ENCODE measurements at regions of chr2 and their contacts with region 1.

Region 1: GRCh38 chr2:109031476-109032228 is 42.6 kb upstream of the EDAR start:
- DNase-seq: peak; percentile 85
- H3K4me3 Mint-ChIP-seq: peak overlapping the region; percentile 81
- H3K27ac Mint-ChIP-seq: peak overlapping the region; percentile 91
- H3K4me1 Mint-ChIP-seq: peaks cover 65% of the 10 kb centered on the region
- H3K27me3 Mint-ChIP-seq: no peaks in the 10 kb centered on the region

Region 2: GRCh38 chr2:108533832-108534583 is 497.6 kb before region 1 on chr2 and contains the start of gene LIMS1:
- CTCF ChIA-PET with region 1: no interaction called
- intact Hi-C with region 1: loop called (anchors 5 kb)
- DNase-seq: peak; percentile 89
- H3K4me3 Mint-ChIP-seq: peak within 1 kb of the TSS; percentile 96
- H3K27ac Mint-ChIP-seq: peak within 1 kb of the TSS; percentile 82
- H3K4me1 Mint-ChIP-seq: peaks cover 31% of the 10 kb centered on the region
- H3K27me3 Mint-ChIP-seq: no peaks in the 10 kb centered on the region
- total RNA-seq, gene LIMS1: 43.8 to 47.1 TPM

Region 3: GRCh38 chr2:108855194-108855593 is 176.5 kb before region 1 on chr2:
- CTCF ChIA-PET with region 1: no interaction called
- intact Hi-C with region 1: loop called (anchors 5 kb)
- DNase-seq: no peak
- H3K4me3 Mint-ChIP-seq: no peak overlapping the region
- H3K27ac Mint-ChIP-seq: no peak overlapping the region
- H3K4me1 Mint-ChIP-seq: peaks cover 2% of the 10 kb centered on the region
- H3K27me3 Mint-ChIP-seq: no peaks in the 10 kb centered on the region

Region 4: GRCh38 chr2:108965540-108966236 is 66.0 kb before region 1 on chr2:
- CTCF ChIA-PET with region 1: no interaction called
- intact Hi-C with region 1: loop called (anchors 2 kb)
- DNase-seq: peak; percentile 74
- H3K4me3 Mint-ChIP-seq: no peak overlapping the region
- H3K27ac Mint-ChIP-seq: no peak overlapping the region
- H3K4me1 Mint-ChIP-seq: peaks cover 93% of the 10 kb centered on the region
- H3K27me3 Mint-ChIP-seq: no peaks in the 10 kb centered on the region

Region 5: DNA sequence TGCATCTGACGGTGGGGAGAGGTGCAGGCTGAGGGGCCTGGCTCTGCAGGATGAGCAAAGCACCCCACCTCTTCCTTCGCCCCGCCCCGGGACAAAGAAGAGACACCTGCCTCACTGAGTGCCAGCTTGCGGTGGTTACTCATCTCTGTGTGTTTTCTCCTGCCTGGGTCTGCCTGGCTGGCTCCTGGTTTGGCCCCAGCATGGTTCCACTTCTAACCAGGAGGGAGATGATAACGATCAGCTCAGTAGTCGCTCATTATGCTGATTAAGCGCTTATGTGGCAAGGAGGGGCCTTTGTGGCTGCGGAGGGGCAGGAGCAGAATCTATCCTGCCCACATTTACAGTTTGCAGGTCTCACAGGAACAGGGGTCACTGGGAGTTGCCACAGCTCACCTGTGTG is 26.0 kb after region 1 on chr2:
- CTCF ChIA-PET with region 1: interaction called, 4 read pairs
- intact Hi-C with region 1: loop called (anchors 1 kb)
- DNase-seq: peak; percentile 64
- H3K4me3 Mint-ChIP-seq: no peak overlapping the region
- H3K27ac Mint-ChIP-seq: no peak overlapping the region
- H3K4me1 Mint-ChIP-seq: peaks cover 43% of the 10 kb centered on the region
- H3K27me3 Mint-ChIP-seq: no peaks in the 10 kb centered on the region

Region 6: DNA sequence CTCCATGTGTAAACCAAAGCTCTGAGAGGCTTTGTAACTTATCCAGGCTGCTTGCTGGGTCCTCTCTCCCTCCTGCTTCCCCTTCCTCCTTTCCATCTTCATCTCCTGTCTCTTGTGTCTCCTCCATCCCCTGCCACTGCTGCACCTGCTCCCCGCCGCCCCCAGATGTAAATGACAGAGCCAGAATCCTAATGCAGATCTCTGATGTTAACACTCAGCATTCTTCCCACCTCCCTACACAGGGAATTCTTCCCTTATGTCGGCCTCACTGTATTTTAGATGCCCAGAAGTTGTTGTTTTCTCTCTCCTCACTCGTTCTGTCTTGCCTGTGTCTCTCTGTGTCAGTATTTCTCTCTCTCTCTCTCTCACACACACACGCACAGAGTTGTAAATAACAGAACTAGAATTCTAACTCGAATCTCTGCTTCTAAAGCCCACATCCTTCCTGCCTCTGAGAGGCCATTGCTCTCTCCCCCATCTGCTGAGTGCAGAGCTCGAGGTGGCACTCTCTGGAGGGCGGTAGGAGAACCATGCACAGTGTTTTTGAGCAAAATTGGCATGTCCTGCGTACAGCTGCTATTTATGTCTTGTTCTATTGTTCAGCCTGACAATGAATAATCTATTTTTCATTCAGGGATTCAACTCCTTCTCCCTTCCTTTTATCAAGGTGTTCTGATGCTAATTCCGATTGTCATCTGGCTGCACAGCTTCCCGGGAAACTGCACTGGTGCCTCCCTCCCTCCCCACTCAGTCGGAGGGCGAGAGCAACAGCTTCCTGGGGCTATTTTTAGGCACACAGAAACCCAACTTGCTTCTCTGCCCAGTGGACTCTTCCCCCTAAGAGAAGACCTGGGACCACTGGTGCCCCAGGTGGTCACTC is 317.3 kb after region 1 on chr2:
- CTCF ChIA-PET with region 1: no interaction called
- intact Hi-C with region 1: loop called (anchors 5 kb)
- DNase-seq: peak; percentile 72
- H3K4me3 Mint-ChIP-seq: peak overlapping the region; percentile 9
- H3K27ac Mint-ChIP-seq: peak overlapping the region; percentile 31
- H3K4me1 Mint-ChIP-seq: peaks cover 46% of the 10 kb centered on the region
- H3K27me3 Mint-ChIP-seq: no peaks in the 10 kb centered on the region

Measured in activated naive CD4-positive, alpha-beta T cell treated with anti-CD3 and anti-CD28 coated beads for 36 hours (primary cell).